HepG2 (cell line): ENCODE measurements at regions of chr6 and their contacts with region 1.

Region 1: DNA sequence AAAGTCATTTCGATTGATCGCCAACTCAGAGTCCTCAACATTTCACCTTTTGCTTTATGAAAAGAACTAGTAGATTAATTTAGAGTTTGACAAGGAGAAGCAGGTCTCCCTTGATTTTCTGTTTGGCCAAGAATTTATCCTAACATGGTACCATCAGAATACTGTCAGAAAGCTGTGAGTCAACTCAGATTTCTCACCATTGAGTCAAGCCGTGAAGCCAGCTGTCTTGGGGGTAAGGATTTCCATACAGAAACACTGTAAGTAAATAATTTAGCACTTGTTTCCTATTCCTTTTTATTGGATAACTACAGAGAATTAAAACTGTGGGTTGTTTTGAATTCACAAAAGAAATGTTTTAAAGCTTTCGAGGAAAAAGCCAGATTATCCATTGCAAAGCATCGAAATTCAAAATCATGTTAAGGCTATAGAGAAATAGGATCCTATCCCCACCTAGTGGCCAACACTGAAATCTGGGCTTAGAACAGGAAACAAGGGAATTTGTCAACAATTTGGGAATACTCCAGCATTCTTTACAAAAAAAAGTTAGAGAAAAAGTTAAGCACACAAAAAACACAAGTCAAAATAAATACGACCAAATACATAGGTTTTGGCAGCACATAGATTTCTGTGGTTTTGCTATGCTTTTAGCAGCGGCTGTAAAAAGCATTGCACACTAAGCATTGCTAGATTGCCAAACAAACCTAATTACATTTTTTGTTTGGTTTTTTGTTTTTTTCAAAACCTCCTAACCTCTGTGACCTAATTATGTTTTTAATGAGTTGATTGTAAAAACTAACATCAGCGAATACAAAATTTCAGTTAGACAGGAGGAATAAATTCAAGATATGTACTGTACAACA is 44.2 kb downstream of the COL11A2 start:
- DNase-seq: peak; percentile 51
- ATAC-seq: peak; percentile 67; the same call in 1 of the 3 replicates
- H3K4me3 ChIP-seq: no peak overlapping the region
- H3K27ac ChIP-seq: no peak overlapping the region
- H3K4me1 ChIP-seq: no peaks in the 10 kb centered on the region
- H3K27me3 ChIP-seq: peaks cover 1 to 6% of the 10 kb centered on the region in 2 experiments; a peak in 1 of 5 replicates
- CTCF ChIP-seq: peak; percentile 79
- EP300 ChIP-seq: no peak
- POLR2A ChIP-seq: no peak
- RAD21 ChIP-seq: peak; percentile 39; the same call in 1 of the 2 replicates

Region 2: DNA sequence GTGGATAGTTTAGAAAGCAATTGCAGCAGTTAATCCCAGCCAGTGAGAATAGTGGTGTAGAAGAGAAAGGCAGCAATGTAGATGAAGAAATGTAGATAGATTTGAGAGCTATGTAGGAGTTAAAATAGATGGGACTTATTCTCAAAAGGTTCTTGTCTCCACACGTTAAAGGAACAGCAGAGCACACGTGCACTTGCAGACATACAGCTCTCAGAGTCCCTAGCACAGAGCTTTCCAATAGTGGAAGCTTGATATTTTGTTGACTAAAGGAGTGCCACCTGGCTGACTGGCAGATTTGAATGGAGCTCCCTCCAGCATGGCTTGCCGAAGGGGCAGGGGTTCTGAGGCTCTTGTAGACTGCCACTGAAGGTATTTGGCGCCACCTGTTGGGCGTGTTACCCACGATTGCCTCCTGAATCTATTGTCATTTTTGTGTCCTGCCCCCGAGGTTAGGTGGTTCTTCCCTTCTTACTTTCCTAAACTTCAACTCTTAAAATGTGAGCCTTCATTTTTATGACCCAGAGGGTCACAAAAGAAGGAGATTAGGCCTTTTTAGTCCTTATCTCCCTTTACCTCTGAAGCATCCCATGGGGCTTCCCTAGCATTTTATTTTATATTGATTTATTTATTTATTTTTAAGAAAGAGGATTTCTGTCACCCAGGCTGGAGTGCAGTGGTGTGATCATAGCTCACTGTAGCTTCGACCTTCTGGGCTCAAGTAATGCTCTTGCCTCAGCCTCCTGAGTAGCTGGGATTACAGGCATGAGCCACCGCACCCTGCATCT is 163.2 kb before region 1 on chr6:
- CTCF ChIA-PET with region 1: no interaction called
- POLR2A ChIA-PET with region 1: no interaction called
- in situ Hi-C with region 1: no loop called
- intact Hi-C with region 1: no loop called
- DNase-seq: peak; percentile 84
- ATAC-seq: peak; percentile 73
- H3K4me3 ChIP-seq: no peak overlapping the region
- H3K27ac ChIP-seq: no peak overlapping the region
- H3K4me1 ChIP-seq: no peaks in the 10 kb centered on the region
- H3K27me3 ChIP-seq: peaks cover 0 to 6% of the 10 kb centered on the region in 2 experiments; a peak in 2 of 5 replicates
- CTCF ChIP-seq: peak; percentile 96
- EP300 ChIP-seq: no peak
- POLR2A ChIP-seq: no peak
- RAD21 ChIP-seq: peak; percentile 90

Region 3: DNA sequence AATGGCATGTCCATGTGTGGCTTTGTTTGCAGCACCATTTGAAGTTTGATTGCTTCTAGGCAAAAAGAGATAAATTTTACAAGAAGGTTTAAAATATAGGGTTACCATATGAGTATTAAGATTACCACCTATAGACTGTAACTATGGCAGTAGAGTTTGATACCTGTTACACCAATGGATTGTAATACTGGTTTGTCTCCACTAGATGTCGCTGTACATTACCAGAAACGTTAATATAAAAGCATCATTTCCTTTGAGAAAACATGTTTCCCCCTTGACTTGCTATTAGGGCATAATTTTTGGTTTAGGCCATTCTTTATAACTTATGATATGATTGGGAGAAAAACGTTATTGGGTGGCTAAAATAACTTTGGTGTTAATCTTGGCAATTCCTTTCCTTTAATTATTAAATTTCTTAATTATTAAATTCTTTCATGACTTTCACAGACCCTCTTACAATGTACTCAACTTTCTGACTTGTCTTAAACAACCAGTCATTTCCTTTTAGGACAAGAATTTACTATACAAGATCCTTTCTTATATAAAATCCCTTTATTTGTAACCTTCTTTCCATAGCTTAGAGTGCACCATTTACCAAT is 29.4 kb before region 1 on chr6:
- CTCF ChIA-PET with region 1: interaction called, 19 read pairs
- POLR2A ChIA-PET with region 1: no interaction called
- in situ Hi-C with region 1: no loop called
- intact Hi-C with region 1: loop called (anchors 1 kb)
- DNase-seq: peak; percentile 66
- ATAC-seq: no peak
- H3K4me3 ChIP-seq: no peak overlapping the region
- H3K27ac ChIP-seq: no peak overlapping the region
- H3K4me1 ChIP-seq: peaks cover 32% of the 10 kb centered on the region
- H3K27me3 ChIP-seq: peaks cover 2 to 30% of the 10 kb centered on the region in 2 experiments; a peak in 4 of 5 replicates
- CTCF ChIP-seq: peak; percentile 75
- EP300 ChIP-seq: no peak
- POLR2A ChIP-seq: no peak
- RAD21 ChIP-seq: no peak

Region 4: GRCh38 chr6:33123732-33124524 is 24.1 kb before region 1 on chr6:
- CTCF ChIA-PET with region 1: interaction called, 19 read pairs
- POLR2A ChIA-PET with region 1: no interaction called
- in situ Hi-C with region 1: no loop called
- intact Hi-C with region 1: no loop called
- DNase-seq: peak; percentile 55
- ATAC-seq: peak; percentile 76
- H3K4me3 ChIP-seq: no peak overlapping the region
- H3K27ac ChIP-seq: no peak overlapping the region
- H3K4me1 ChIP-seq: peaks cover 38% of the 10 kb centered on the region
- H3K27me3 ChIP-seq: no peaks in the 10 kb centered on the region; a peak in 1 of 5 replicates
- CTCF ChIP-seq: peak; percentile 87
- EP300 ChIP-seq: no peak
- POLR2A ChIP-seq: no peak
- RAD21 ChIP-seq: peak; percentile 66

Region 5: DNA sequence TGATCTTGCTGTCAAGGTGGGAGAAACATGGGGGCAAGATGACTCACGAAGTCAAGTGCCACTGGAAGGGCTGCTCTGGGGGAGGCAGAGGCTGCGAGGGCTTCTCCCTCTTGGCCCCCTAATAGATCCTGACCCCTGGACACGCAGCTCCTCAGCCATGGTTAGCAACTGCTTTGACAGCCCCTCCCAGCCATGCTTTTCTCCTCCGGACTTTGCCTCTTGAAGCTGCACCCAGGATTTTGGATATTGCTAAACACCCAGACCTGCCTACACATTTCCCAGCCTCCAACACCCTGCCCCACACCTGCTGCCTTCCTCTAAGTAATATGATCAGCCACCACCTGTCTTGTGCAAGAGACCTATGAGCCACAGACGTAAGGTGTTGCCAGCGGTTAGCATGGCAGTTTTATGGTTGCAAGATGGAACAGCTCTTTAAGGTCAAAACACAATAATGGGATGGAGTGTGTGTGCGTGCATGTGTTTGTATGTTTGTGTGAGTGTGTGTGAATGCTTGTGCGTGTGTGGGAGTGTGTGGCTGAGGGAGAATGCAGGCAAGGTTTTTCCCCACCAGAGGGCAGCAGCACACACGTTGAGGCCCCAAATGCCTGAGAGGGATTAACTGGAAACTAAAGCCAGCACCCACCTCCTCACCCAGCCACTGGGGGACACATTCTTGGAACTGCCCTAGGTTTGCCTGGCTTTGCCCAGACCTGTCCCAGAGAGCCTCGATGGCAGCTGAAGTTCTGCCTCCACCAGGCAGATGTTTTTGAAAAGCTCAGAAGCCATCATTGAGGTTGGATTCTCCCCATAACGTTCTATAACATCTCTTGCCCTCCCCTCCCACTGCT is 596.2 kb after region 1 on chr6:
- CTCF ChIA-PET with region 1: no interaction called
- POLR2A ChIA-PET with region 1: no interaction called
- in situ Hi-C with region 1: no loop called
- intact Hi-C with region 1: no loop called
- DNase-seq: peak; percentile 78
- ATAC-seq: peak; percentile 73
- H3K4me3 ChIP-seq: 0 out of 6 replicates have a peak overlapping the region, but pooled peaks of 1 of the 3 experiments have one; percentile 15
- H3K27ac ChIP-seq: no peak overlapping the region
- H3K4me1 ChIP-seq: peaks cover 58% of the 10 kb centered on the region
- H3K27me3 ChIP-seq: peaks cover 4 to 38% of the 10 kb centered on the region in 2 experiments; a peak in 4 of 5 replicates
- CTCF ChIP-seq: peak; percentile 98
- EP300 ChIP-seq: 0 out of 4 replicates have a peak, but pooled peaks of 1 of the 2 experiments have one; percentile 9
- POLR2A ChIP-seq: no peak
- RAD21 ChIP-seq: peak; percentile 87